A673 (cell line): ENCODE measurements at regions of chr1 and their contacts with region 1.

Region 1: DNA sequence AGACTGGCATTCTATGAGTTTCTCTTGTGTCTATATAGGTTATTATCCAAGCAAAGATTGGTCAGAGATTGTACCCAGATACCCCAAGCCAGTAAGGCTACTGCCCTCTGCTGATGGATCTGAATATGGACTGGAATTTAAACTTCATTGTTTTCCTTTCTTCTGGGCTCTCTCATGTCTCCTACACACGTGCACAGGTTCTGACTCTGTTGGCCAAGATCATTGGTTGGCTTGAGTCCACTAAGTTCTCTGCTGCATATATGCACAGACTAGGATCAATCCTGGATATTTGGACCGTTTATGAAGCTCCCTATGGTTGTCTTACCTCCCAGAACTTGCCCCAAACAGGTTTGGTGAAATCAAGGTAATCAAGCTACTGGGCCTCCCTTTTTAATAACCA is 69.7 kb downstream of the CC2D1B start:
- DNase-seq: peak; percentile 64
- H3K4me3 ChIP-seq: no peak overlapping the region
- H3K27ac ChIP-seq: no peak overlapping the region
- H3K4me1 ChIP-seq: no peaks in the 10 kb centered on the region
- H3K27me3 ChIP-seq: no peaks in the 10 kb centered on the region
- CTCF ChIP-seq: peak; percentile 79

Region 2: DNA sequence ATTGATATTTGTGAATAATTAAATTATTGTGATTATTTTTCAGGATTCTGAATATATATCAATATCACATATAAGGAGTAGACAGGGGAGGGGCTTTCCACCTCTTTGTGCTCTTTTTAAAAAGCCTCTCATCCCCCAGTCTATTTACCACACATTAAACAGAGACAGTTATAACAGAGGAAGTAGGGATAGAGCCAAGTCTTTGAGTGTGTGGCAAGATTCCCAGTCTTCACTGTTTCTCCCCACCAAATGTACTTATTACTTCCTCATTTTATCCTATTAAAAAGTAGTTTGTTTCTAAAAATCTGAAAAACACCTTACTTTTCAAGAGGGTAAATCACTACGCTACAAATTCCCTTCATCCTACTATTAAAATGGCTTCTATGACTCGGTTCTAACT is 824.0 kb before region 1 on chr1:
- CTCF ChIA-PET with region 1: no interaction called
- POLR2A ChIA-PET with region 1: no interaction called
- intact Hi-C with region 1: no loop called
- DNase-seq: no peak
- H3K4me3 ChIP-seq: no peak overlapping the region
- H3K27ac ChIP-seq: no peak overlapping the region
- H3K4me1 ChIP-seq: peaks cover 24% of the 10 kb centered on the region
- H3K27me3 ChIP-seq: no peaks in the 10 kb centered on the region
- CTCF ChIP-seq: no peak

Region 3: DNA sequence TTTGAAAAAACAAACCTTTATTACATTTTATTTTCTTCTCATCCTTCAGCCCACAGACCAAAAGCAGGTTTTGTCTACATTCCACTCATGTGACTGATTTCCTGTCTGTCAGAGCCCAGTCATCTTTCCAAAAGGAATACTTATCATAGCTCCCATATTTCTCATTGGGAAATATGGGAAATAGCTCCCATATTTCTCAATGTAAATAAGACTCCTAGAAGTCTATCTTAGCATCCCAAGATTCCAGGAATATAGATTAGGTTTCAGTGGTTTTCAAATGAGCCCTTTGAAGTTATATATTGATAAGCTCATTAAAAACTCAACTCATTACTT is 398.7 kb before region 1 on chr1:
- CTCF ChIA-PET with region 1: interaction called, 4 read pairs
- POLR2A ChIA-PET with region 1: no interaction called
- intact Hi-C with region 1: loop called (anchors 2 kb)
- DNase-seq: no peak
- H3K4me3 ChIP-seq: no peak overlapping the region
- H3K27ac ChIP-seq: peak overlapping the region; percentile 43
- H3K4me1 ChIP-seq: peaks cover 35% of the 10 kb centered on the region
- H3K27me3 ChIP-seq: no peaks in the 10 kb centered on the region
- CTCF ChIP-seq: no peak

Region 4: DNA sequence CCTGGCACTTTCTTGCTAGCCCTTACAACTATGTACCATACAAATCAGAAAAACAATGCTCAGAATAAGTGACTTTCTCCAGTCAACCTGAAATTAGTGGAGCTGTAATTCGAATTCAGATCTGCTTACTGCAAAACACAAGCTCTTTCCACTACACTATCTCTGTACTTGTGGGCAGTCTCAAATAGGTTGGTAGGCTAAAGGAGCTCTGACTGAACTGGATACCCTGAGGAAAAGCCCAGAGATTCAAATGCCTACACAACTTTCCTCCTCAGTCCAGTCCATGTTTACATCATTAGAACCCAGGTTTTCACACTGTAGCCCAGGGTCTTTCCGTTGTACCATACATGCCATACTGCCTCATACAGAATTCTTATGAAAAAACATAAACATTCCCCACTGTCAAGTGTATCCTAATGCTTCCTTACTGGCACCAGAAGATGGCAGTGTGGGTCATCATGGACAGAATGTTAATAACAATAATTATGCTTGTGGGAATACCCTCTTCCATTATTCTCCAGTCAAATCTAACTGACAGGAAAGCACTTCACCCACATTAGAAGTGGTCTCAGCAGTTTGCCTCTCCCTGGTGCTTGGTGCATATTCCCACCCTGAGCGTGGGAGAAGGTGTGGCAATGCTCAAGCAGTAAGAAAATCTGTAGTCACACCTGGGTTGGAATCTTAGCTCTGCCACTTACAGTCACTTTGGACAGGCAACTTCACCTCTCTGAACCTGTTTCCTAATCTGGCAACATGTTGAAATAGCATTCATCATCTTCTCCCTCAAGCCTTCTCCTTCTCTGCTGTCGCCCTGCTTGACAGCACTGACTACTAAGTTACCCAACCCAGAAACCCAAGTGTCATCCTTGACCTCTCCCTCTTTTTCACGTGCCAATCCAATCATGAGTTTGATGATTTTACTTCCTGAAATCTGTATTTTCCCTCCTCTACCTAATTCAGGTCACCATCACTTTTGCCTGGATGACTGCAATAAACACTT is 168.9 kb before region 1 on chr1:
- CTCF ChIA-PET with region 1: interaction called, 6 read pairs
- POLR2A ChIA-PET with region 1: no interaction called
- intact Hi-C with region 1: loop called (anchors 5 kb)
- DNase-seq: peak; percentile 84
- H3K4me3 ChIP-seq: no peak overlapping the region
- H3K27ac ChIP-seq: no peak overlapping the region
- H3K4me1 ChIP-seq: no peaks in the 10 kb centered on the region
- H3K27me3 ChIP-seq: peaks cover 5% of the 10 kb centered on the region
- CTCF ChIP-seq: peak; percentile 84

Region 5: DNA sequence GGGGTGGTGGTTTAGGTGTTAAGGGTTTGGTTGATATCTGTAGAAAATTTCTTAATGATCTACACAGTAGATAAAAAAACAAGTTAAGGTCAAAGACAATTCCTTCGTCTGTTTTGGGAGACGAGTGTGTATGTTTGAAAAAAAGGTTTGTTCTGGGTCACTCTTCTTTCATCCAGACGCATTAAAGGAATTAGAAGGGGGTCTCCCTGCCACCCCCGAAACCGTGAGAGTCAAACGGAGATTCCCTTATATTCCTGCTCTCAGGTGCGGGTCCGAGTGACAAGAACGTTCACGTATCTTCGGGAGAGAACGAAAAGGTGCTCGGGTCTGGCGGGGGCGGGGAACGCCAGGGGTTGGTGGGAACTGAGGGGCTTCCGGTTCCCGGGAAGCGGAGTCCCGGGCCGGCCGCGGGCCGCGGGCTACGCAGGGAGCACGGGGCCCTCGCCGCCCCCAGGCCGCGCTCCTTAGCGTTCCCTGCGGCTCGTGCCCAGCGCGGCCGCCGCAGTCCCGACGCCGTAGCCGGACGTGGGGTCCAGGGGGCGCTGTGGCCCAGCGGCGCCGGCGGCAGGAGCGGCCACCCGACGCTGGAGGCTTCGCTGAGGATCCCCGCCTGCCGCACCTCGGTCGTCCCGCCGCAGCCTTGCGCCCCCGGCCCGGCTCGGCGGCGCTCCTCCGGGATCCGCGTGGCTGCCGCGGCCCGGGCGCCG is 154.7 kb before region 1 on chr1 and contains the start of gene ZFYVE9:
- CTCF ChIA-PET with region 1: interaction called, 3 read pairs
- POLR2A ChIA-PET with region 1: no interaction called
- intact Hi-C with region 1: loop called (anchors 5 kb)
- DNase-seq: peak; percentile 90
- H3K4me3 ChIP-seq: peak within 1 kb of the TSS; percentile 97
- H3K27ac ChIP-seq: peak within 1 kb of the TSS; percentile 94
- H3K4me1 ChIP-seq: peaks cover 19% of the 10 kb centered on the region
- H3K27me3 ChIP-seq: no peaks in the 10 kb centered on the region
- CTCF ChIP-seq: peak; percentile 48; the same call in 1 of the 2 replicates
- total RNA-seq, gene ZFYVE9: 19.6 and 23.3 TPM in 2 replicates

Region 6: DNA sequence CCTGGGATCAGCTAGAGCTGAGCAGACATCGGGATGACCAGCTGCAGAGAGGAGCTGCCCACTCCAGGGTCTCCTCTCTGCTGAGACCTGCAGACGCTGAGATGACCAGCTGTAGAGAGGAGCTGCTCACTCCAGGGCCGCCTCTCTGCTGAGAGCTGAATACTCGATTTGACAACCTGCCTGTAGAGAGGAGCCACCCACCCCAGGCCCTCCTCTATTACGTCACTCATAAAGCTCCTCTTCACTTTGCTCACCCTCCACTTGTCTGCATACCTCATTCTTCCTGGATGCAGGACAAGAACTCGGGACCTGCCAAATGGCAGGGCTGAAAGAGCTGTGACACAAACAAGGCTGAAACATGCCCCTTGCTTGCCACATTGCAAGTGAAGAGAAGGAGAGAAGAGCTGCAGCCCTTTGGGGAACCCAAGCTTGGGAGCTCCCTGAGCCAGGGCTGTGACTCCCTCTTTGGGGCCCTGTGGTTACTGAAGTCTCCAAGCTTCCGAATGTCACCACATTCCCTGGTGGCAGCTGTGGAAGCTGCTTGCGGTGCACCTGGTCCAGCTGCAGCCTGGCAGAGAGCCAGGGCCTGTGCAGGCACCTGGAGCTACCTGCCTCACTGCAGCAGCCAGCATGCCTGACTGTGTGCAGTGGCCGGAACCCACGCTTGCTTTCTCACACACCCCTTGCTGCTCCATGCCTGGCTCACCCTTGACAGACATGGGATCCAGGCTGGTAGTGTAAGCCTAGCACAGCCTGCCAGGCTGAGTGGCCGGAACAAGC is 10.1 kb after region 1 on chr1:
- CTCF ChIA-PET with region 1: interaction called, 11 read pairs
- POLR2A ChIA-PET with region 1: no interaction called
- intact Hi-C with region 1: no loop called
- DNase-seq: no peak
- H3K4me3 ChIP-seq: no peak overlapping the region
- H3K27ac ChIP-seq: no peak overlapping the region
- H3K4me1 ChIP-seq: no peaks in the 10 kb centered on the region
- H3K27me3 ChIP-seq: no peaks in the 10 kb centered on the region
- CTCF ChIP-seq: no peak